Left ventricle myocardium superior (tissue), 1 donor: ENCODE measurements at regions of chr7 and their contacts with region 1.

Region 1: GRCh38 chr7:132500727-132501440 is 75.4 kb downstream of the PLXNA4 start:
- DNase-seq: peak; percentile 74
- ATAC-seq: peak; percentile 89

Region 2: GRCh38 chr7:132394283-132395198 is 106.3 kb before region 1 on chr7:
- intact Hi-C with region 1: loop called (anchors 10 kb)
- DNase-seq: no peak
- ATAC-seq: peak; percentile 13

Region 3: DNA sequence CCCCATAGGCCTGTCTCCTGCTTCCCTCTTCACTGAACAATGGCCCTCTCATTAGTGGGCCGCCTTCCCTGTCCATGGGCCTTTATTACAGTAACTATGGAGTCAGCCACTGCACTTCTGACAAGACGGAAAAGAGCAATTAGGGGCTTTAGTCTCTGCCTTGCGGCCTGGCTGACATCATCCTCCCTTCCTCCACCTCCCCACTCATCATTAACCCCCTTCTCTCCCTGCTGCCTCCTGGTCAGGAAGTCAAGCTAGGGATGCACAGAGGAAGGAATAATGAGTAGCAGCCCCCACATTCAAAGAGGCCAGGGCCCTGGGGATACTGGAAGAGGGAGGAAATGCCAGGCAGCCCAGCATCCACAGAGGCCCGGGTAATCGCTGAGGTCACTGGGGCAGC is 177.0 kb after region 1 on chr7:
- intact Hi-C with region 1: no loop called
- DNase-seq: no peak
- ATAC-seq: no peak